Activated CD8-positive, alpha-beta memory T cell treated with anti-CD3 and anti-CD28 coated beads, Interleukin-2, amount 10 ng/mL, durations not matched to agents 7 days and 5 days (primary cell): ENCODE measurements at regions of chr3 and their contacts with region 1.

Region 1: DNA sequence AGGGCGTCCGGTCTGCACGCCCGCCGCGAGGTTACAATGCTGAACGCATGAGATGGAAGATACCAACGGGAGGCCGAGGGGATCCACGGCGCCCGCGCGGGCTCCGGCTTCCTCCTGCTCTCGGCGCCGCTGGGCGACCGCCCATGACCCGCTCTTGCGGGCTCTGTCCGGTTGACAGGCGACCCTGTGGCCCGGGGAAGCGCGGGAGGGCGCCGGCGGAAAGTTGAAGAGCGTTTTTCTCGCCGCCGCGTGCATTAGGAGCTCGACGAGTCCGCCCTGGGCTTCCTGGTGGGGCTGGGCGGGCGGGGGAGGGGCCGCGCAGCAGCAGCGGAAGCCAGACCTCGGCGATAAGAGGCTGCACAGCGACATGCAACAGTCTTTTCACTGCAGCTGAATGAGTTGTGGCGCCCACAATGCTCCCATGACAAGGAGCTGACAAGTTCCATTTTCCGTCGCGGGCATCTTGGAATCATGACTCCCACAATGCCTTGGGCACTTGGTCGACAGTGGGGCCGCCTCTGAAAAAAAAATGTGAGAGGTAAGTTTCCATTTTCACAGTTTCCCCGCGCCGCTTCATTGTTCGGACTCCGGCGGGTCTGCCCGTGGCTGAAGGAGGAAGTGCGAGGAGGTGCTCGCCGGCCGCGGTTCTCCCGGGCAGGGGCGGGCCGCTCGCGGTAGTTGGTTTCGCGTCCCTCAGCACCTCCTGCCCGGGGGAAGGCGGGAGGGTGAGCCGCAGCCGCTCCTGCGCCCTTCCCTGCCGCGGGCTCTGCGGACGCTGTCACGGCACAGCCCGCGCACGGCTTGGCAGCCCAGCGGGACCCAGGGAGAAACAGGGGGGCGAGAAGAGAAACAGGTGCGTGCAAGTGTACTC is at the start of gene MBNL1:
- DNase-seq: peak; percentile 95
- ATAC-seq: peak; percentile 71
- H3K4me3 Mint-ChIP-seq: peak within 1 kb of the TSS; percentile 79
- H3K27ac Mint-ChIP-seq: peak within 1 kb of the TSS; percentile 96
- H3K4me1 Mint-ChIP-seq: peaks cover 51% of the 10 kb centered on the region
- H3K27me3 Mint-ChIP-seq: no peaks in the 10 kb centered on the region
- total RNA-seq, gene MBNL1: 370 to 398 TPM

Region 2: GRCh38 chr3:152127058-152127457 is 141.7 kb before region 1 on chr3:
- CTCF ChIA-PET with region 1: no interaction called
- DNase-seq: no peak
- ATAC-seq: peak; percentile 86
- H3K4me3 Mint-ChIP-seq: no peak overlapping the region
- H3K27ac Mint-ChIP-seq: no peak overlapping the region
- H3K4me1 Mint-ChIP-seq: peaks cover 19% of the 10 kb centered on the region
- H3K27me3 Mint-ChIP-seq: peaks cover 6% of the 10 kb centered on the region

Region 3: GRCh38 chr3:152243721-152244516 is 24.9 kb before region 1 on chr3:
- CTCF ChIA-PET with region 1: interaction called, 12 read pairs
- DNase-seq: peak; percentile 61
- ATAC-seq: peak; percentile 48
- H3K4me3 Mint-ChIP-seq: peak overlapping the region; percentile 83
- H3K27ac Mint-ChIP-seq: peak overlapping the region; percentile 93
- H3K4me1 Mint-ChIP-seq: peaks cover 48% of the 10 kb centered on the region
- H3K27me3 Mint-ChIP-seq: no peaks in the 10 kb centered on the region

Region 4: DNA sequence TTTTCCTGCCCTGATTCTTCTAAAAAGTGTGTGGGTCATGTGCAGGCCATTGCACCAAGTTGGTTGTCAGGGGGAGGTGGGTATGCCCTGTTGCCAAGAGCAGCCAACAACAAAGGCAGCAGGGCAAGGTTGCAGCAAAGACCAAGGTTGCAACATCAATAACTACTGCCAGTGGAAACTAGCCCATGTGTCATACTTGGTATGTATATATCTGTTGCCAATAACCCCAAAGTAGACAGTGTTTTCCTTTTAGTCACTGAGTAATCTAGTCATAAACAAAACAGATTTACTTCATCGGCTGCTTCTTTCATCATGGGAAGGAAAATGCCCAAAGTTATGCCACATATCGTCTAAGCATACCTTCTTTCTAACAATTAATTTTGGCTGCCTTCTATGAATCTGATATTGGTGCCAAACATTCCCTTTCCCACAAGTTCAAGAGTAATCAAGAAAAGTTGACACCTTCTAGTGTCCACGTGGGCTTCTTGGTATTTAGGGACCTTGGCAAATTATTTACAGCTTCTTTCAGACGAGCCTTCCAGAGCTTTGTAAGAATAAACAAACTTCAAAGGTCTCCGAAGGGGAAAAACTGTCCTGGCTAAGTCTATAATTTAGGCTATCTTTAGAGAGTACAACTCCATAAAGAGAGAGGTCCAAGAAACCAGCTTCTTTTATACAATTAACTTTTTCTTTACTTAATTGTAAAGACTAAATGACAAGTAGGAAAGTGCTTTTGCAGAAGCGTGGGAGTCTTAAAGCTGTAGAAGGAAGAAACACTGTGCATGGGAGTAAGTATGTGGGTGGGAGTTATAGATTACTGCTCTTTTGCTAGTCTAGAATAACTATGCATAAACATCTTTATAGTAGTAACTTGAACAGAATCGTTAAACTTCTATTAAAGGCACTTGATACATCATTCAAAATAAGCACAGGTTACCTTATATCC is 10.1 kb before region 1 on chr3:
- CTCF ChIA-PET with region 1: interaction called, 22 read pairs
- DNase-seq: peak; percentile 83
- ATAC-seq: peak; percentile 69
- H3K4me3 Mint-ChIP-seq: peak overlapping the region; percentile 66
- H3K27ac Mint-ChIP-seq: peak overlapping the region; percentile 94
- H3K4me1 Mint-ChIP-seq: peaks cover 82% of the 10 kb centered on the region
- H3K27me3 Mint-ChIP-seq: no peaks in the 10 kb centered on the region

Region 5: DNA sequence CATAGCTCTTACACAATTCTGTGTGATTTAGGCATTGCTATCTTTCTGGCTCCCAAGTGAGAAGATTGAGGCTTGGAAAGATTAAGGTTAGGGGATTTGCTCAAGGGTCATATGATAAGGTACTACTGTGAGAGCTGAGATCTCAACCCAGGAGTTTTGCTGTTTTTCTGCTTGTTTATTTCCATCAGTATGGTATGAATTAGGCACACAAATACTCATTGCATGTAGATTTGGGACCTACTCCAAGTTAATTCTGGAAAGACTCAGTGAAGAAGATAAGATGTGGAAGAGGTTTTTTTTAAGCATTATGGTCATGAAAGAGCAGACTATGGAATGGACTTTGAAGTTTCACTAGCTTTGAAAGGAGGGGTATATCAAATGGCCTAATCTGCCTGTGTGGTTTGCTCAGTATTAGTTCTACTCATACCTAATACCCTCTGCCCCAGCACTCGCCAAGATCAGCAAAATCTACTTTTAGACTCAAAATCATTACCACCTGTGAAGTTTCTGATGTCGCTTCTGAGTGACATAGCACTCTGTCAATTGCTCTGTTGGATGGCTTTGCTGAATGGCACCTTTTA is 12.4 kb after region 1 on chr3:
- CTCF ChIA-PET with region 1: interaction called, 11 read pairs
- DNase-seq: no peak
- ATAC-seq: peak; percentile 25
- H3K4me3 Mint-ChIP-seq: peak overlapping the region; percentile 47
- H3K27ac Mint-ChIP-seq: peak overlapping the region; percentile 73
- H3K4me1 Mint-ChIP-seq: peaks cover 81% of the 10 kb centered on the region
- H3K27me3 Mint-ChIP-seq: no peaks in the 10 kb centered on the region